Head of caudate nucleus (tissue), 42 donors: ENCODE measurements at regions of chr12 and their contacts with region 1.

Region 1: GRCh38 chr12:54005853-54006686 is 2.7 kb upstream of the HOXC8 start:
- DNase-seq: peak; percentile 42 to 95 (median 86)

Region 2: DNA sequence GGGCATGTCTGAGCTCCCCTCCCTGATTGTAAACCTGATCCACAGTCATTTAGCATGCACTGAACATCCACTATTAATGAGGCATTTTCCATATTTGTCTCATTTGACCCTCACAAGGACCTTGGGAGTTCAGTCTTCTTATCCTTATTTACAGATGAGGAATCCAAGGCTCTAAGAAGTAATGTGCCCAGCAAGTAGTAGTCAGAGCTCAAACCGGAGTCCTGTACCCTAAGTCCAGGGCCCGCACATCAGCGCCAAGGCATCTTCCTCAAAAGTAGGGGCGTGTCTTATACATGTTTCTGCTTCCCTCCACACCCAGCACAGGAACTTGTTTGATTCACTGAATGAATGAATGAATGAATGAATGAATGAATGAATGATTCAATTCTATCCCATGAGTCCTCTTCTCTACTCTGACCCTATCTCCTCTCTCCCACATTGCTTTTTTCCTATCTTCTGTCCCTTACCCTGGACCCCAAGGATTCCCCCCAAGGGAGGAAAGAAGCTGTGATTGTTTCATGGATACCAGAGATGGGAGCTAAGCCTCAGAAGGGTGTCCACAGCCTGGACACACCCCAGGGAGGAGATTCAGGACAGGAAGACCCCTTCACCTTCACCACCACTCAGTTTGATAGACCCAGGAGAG is 1079.4 kb before region 1 on chr12:
- intact Hi-C with region 1: no loop called
- DNase-seq: no peak

Region 3: DNA sequence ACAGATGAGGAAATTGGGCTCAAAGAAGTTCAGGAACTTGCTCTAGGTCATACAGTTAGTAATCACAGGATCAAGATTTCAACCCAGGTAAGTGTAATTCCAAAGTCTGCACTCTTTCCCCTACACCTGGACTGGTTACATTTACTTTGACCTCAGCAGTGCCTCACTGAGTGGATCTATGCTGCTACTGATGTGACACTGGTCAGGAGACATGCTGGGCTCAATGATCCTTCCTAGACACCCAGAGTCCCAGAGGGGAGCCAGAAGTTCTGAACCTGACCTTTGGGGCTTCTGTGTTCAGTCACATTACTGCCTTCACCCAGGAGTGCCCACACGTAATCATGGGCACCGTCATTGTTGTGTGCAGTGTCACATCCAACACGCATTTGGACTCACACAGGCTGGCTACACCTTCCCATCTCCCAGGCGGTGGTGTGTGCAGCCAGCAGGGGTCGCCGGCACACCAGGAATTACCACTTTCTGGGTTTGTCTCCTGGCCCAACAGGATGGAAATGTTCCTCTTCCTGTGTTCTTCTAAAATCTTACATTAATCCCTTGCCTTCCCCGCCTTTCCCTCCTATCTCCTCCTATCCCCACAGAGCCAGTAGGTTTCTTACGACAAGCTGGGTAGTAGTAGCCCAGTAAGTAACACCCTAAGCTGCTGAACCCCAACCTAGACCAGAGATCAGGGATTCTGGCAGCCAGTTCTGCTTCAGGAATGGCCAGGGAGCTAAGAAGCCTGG is 304.4 kb before region 1 on chr12:
- intact Hi-C with region 1: loop called (anchors 10 kb)
- DNase-seq: peak; percentile 79 to 95 (median 90)

Region 4: GRCh38 chr12:54191550-54192022 is 185.5 kb after region 1 on chr12:
- intact Hi-C with region 1: loop called (anchors 2 kb)
- DNase-seq: peak; percentile 69 to 92 (median 82)

Region 5: GRCh38 chr12:54207484-54208294 is 201.6 kb after region 1 on chr12:
- intact Hi-C with region 1: loop called (anchors 5 kb)
- DNase-seq: peak in 41 of 42 donors; percentile 34 to 87 (median 68)